Heart left ventricle (tissue), 16 donors: ENCODE measurements at regions of chr1 and their contacts with region 1.

Region 1: DNA sequence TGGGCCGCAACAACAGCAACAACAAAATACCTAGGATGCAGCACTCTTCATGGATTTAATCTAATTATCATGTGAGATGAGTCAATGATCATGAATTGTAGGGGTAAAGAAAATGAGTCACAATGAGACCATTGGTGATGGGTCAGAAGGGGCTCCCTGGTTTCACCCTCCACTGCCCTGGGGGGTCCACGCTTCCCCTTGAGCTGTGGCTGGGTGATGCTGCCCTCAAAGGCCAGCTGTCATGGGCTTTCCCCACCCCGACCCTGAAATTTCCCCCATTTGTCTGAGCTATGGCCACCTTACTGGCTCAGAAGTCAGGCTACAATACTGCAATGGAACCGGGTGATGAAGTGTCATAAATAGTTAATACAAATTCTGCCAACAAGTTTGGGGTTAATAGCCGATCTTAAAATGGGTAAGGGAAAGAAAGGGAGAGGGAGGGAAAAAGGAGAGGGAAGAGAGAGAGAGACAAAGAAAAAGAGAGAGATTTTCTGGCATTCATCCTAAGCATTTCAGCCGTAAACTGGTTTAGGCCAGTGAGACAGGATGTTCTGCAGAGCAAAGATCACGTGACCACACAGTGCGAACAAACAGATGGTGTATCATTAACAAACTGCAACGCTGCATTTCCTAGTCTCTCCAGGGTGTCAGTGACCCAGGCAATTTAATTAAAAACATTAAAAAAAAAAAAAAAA is 143.4 kb upstream of the ERRFI1 start:
- DNase-seq: peak in 4 of 5 donors; percentile 46 to 69 (median 62)
- ATAC-seq: peak; percentile 74 to 93 (median 86)
- H3K4me3 ChIP-seq: no peak overlapping the region
- H3K27ac ChIP-seq: peak overlapping the region in 10 of 12 donors; percentile 41 to 89 (median 58)
- H3K4me1 ChIP-seq: peaks cover 0 to 17% (median 12%) of the 10 kb centered on the region in 12 donors
- H3K27me3 ChIP-seq: no peaks in the 10 kb centered on the region
- CTCF ChIP-seq: no peak
- POLR2A ChIP-seq: no peak

Region 2: DNA sequence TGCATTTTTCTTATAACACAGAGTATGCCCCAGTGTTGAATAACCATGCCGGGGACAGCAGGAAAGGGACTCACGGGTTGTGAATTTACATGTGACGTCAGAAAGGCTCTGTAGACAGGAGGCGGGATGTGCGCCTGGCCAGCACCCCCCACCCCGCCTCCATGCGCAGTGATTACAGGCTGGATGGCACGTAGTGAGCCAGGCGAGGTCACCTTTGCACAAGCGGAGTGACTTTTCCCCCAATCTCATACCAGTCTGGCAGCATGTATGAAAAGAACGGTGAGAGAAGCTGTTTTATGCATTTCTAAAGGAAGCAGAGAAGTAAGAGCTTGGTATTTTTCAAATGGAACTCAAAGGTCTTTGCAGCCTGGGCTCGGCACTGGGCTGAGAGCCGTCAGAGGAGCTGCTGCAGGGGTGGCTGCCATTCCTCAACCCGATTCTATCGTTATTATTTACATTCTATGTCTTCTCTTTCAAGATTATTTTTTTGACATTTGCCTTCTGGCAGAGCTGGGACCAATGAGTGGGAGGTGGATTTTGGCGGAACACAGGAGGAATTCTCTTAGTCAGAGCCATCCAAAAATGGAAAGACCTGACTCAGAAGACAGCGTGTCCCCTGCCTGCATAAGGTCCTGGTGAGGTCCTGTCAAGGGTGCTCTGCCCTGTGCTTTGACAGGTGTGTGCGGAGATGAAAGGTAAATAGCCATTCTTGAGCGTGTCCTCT is 32.8 kb after region 1 on chr1:
- intact Hi-C with region 1: loop called in 1 of 10 experiments (anchors 5 kb)
- DNase-seq: peak; percentile 37 to 70 (median 56)
- ATAC-seq: peak; percentile 80 to 90 (median 84)
- H3K4me3 ChIP-seq: peak overlapping the region in 7 of 12 donors; percentile 4 to 45 (median 35)
- H3K27ac ChIP-seq: peak overlapping the region in 11 of 12 donors; percentile 13 to 89 (median 69)
- H3K4me1 ChIP-seq: peaks cover 0 to 39% (median 7%) of the 10 kb centered on the region in 12 donors
- H3K27me3 ChIP-seq: no peaks in the 10 kb centered on the region
- CTCF ChIP-seq: no peak
- POLR2A ChIP-seq: no peak